Panc1 (cell line): ENCODE measurements at regions of chr13 and their contacts with region 1.

Region 1: DNA sequence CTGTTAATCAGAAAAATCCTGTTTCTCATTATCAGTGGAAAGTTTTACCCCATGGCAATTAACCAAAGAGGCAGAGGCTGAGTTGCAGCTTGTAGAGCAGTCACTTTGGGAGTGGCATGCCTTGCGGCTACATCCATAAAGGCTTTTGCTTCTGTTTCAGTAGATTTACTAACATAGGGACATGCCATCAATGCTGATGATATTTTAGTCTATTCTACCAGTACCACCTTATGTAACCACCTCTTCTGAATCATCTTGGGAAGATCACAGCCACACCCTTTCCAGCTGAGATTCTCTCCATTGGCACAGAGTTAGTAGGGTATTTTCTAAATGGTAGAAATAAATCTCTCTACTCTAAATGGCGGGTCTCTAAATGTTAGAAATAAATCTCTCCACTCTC is 37.5 kb downstream of the POSTN start:
- DNase-seq: no peak
- ATAC-seq: no peak
- H3K4me3 ChIP-seq: no peak overlapping the region
- H3K27ac ChIP-seq: no peak overlapping the region
- H3K4me1 ChIP-seq: no peaks in the 10 kb centered on the region
- H3K27me3 ChIP-seq: no peaks in the 10 kb centered on the region
- CTCF ChIP-seq: no peak

Region 2: DNA sequence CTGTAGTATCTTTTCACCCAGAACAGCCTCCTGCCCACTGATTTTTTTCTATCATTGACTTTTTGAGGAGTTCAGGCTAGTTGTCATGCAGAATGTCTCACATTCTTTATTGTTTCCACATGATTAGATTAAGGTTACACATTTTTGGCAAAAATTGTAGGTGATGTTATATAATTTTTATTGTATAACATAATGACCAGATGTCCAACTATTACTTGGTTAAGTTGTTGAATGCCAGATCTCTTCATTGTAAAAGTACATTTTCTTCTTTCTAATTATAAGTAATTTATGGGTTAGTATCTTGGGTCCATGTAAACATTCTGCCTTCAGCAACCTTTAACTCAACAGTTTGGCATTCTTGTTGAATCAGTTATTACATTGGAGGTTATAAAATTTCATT is 100.9 kb before region 1 on chr13:
- CTCF ChIA-PET with region 1: no interaction called
- POLR2A ChIA-PET with region 1: no interaction called
- in situ Hi-C with region 1: no loop called
- intact Hi-C with region 1: loop called (anchors 10 kb)
- DNase-seq: no peak
- ATAC-seq: no peak
- H3K4me3 ChIP-seq: no peak overlapping the region
- H3K27ac ChIP-seq: no peak overlapping the region
- H3K4me1 ChIP-seq: no peaks in the 10 kb centered on the region
- H3K27me3 ChIP-seq: no peaks in the 10 kb centered on the region
- CTCF ChIP-seq: no peak